GM12878 (cell line): ENCODE measurements at regions of chr7 and their contacts with region 1.

Region 1: GRCh38 chr7:23093546-23093945 is 12.0 kb upstream of the KLHL7 start:
- DNase-seq: no peak
- ATAC-seq: no peak
- H3K4me3 ChIP-seq: no peak overlapping the region
- H3K27ac ChIP-seq: no peak overlapping the region
- H3K4me1 ChIP-seq: no peaks in the 10 kb centered on the region
- H3K27me3 ChIP-seq: no peaks in the 10 kb centered on the region
- CTCF ChIP-seq: no peak
- EP300 ChIP-seq: no peak
- POLR2A ChIP-seq: no peak
- RAD21 ChIP-seq: no peak

Region 2: DNA sequence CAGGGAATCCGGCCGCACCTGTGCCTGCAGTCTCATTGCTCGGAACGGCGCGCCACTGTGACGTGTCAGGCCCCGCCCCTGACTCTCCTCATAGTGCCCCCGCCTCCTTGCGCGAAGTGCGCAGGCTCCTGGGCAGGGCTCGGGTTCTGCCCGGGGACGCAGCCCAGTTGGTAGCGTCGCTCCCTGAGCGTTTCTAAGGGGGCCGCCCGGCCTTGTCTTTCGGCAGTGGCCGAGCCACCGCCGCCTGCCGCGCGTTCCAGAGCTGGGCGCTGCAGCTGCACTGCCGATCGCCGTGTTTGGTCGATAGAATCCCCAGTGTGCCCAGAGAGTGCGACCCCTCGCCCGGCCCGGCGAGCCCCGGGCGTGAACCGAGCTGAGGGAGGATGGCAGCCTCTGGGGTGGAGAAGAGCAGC is 12.1 kb after region 1 on chr7 and contains the start of gene KLHL7:
- CTCF ChIA-PET with region 1: interaction called, 3 read pairs
- POLR2A ChIA-PET with region 1: interaction called, 10 read pairs
- RAD21 ChIA-PET with region 1: no interaction called
- SMC1A ChIA-PET with region 1: interaction called, 3 read pairs
- in situ Hi-C with region 1: no loop called
- intact Hi-C with region 1: no loop called
- DNase-seq: peak; percentile 64
- ATAC-seq: peak; percentile 98
- H3K4me3 ChIP-seq: peak within 1 kb of the TSS; percentile 99
- H3K27ac ChIP-seq: peak within 1 kb of the TSS; percentile 77
- H3K4me1 ChIP-seq: peaks cover 7% of the 10 kb centered on the region; the same call in 1 of the 2 replicates
- H3K27me3 ChIP-seq: no peaks in the 10 kb centered on the region
- CTCF ChIP-seq: no peak
- EP300 ChIP-seq: no peak
- POLR2A ChIP-seq: peak; percentile 92
- RAD21 ChIP-seq: no peak
- polyA plus RNA-seq, gene KLHL7: 6.4 to 12.4 TPM

Region 3: GRCh38 chr7:23218196-23218595 is 124.7 kb after region 1 on chr7:
- CTCF ChIA-PET with region 1: no interaction called
- POLR2A ChIA-PET with region 1: no interaction called
- RAD21 ChIA-PET with region 1: no interaction called
- SMC1A ChIA-PET with region 1: no interaction called
- in situ Hi-C with region 1: no loop called
- intact Hi-C with region 1: no loop called
- DNase-seq: no peak
- ATAC-seq: no peak
- H3K4me3 ChIP-seq: no peak overlapping the region
- H3K27ac ChIP-seq: no peak overlapping the region
- H3K4me1 ChIP-seq: no peaks in the 10 kb centered on the region
- H3K27me3 ChIP-seq: peaks cover 0 to 1% of the 10 kb centered on the region in 2 experiments; a peak in 1 of 4 replicates
- CTCF ChIP-seq: no peak
- EP300 ChIP-seq: no peak
- POLR2A ChIP-seq: no peak
- RAD21 ChIP-seq: no peak